ENCODE measurements at regions of chr3 and their contacts with region 1.

Region 1: GRCh38 chr3:153927107-153927506 is 194.1 kb upstream of the ARHGEF26 start:
- DNase-seq: no peak
- H3K4me3 ChIP-seq: no peak overlapping the region
- H3K27ac ChIP-seq: no peak overlapping the region
- H3K4me1 ChIP-seq: no peaks in the 10 kb centered on the region
- H3K27me3 ChIP-seq: no peaks in the 10 kb centered on the region
- CTCF ChIP-seq: no peak

Region 2: DNA sequence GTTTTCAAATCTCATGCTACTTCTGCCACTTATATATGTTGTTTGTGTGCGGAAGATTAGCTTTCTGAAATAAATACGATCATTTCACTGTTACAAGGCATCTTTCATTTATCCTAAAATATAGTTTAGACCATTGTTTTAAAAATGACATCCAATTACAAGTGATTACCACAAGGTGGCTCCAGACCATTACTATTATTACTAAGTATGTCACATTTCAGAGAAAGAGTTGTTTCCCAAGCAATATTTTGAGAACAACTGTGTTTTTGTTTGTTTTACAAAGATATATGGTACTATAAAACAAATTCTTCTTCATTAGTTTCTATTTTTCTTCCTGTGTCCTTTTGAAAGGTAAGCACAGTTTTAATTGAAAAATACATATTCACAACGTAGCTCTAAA is 901.1 kb before region 1 on chr3:
- intact Hi-C with region 1: loop called (anchors 10 kb)
- DNase-seq: no peak
- H3K4me3 ChIP-seq: no peak overlapping the region
- H3K27ac ChIP-seq: no peak overlapping the region
- H3K4me1 ChIP-seq: no peaks in the 10 kb centered on the region
- H3K27me3 ChIP-seq: no peaks in the 10 kb centered on the region
- CTCF ChIP-seq: peak; percentile 57

Region 3: DNA sequence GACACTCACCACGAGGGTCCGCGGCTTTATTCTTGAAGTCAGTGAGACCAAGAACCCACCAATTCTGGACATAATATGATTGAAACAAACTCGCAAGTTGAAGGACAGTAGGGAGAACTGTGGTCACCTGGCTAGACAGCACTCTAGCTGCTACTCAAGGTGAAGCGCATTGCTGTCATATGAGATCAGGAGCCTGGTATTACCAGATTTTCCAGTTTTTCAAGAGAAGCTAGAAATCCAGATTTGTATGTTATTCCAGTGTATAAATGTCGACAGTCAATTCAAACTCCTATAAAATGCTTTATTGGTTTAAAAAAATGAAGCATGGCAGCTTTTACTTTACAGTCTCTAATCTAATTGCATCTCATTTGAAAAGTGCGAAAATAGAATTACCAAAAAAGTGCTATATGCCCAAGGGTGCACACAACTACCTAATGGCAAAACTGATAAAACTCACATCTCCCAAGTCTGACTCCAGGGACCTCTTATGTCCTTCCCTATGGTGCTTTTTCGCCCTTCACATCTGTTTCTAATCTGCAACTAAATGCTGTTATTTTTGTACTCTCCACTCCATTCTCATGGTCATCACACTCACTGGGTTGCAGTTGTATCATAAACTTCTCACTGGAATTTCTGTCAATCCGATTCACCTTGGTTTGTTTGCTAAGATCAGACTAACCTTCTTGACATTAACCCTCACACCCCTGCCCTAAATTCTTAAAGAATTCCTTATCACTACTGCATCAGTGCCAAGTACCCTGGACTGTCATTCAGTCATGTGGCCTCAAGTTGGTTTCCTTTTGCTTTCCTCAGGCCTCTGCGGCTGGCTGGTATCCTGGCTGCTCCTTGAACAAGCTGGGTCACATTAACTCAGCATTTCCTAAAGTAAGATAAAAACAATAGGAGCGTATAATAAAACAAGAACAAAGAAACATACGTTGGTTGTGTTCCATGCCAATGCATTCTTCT is 162.6 kb after region 1 on chr3:
- intact Hi-C with region 1: no loop called
- DNase-seq: no peak
- H3K4me3 ChIP-seq: no peak overlapping the region
- H3K27ac ChIP-seq: no peak overlapping the region
- H3K4me1 ChIP-seq: no peaks in the 10 kb centered on the region
- H3K27me3 ChIP-seq: no peaks in the 10 kb centered on the region
- CTCF ChIP-seq: no peak